MCF 10A (cell line): ENCODE measurements at regions of chr3 and their contacts with region 1.

Region 1: GRCh38 chr3:169041677-169042171 is 621.8 kb downstream of the MECOM start:
- DNase-seq: peak; percentile 46
- H3K4me3 Mint-ChIP-seq: no peak overlapping the region
- H3K27ac Mint-ChIP-seq: peak overlapping the region; percentile 7
- H3K4me1 Mint-ChIP-seq: no peaks in the 10 kb centered on the region
- H3K27me3 Mint-ChIP-seq: no peaks in the 10 kb centered on the region
- CTCF ChIP-seq: peak; percentile 42

Region 2: GRCh38 chr3:168933614-168934013 is 108.1 kb before region 1 on chr3:
- CTCF ChIA-PET with region 1: no interaction called
- POLR2A ChIA-PET with region 1: no interaction called
- intact Hi-C with region 1: no loop called
- DNase-seq: no peak
- H3K4me3 Mint-ChIP-seq: no peak overlapping the region
- H3K27ac Mint-ChIP-seq: no peak overlapping the region
- H3K4me1 Mint-ChIP-seq: no peaks in the 10 kb centered on the region
- H3K27me3 Mint-ChIP-seq: no peaks in the 10 kb centered on the region
- CTCF ChIP-seq: no peak

Region 3: DNA sequence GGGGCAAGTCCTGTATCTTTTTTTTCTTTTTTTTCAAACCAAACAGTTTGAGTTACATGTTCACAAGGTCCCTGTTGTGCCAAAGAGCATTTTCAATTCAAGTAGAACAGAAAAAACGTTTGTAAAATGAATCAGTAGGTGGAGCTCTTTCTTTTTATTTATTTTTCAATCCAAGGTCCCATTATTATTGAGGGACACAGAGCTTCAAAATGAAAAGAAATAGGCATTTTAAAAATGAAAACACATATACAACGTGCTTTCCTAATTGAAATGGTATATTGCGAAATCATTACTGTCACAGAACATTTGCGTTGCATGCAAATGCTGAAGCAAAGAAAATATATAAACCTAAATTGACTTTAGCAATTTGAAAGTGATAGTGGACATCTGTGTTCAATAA is 89.2 kb before region 1 on chr3:
- CTCF ChIA-PET with region 1: interaction called, 13 read pairs
- POLR2A ChIA-PET with region 1: interaction called, 4 read pairs
- intact Hi-C with region 1: loop called (anchors 1 kb)
- DNase-seq: peak; percentile 36
- H3K4me3 Mint-ChIP-seq: no peak overlapping the region
- H3K27ac Mint-ChIP-seq: no peak overlapping the region
- H3K4me1 Mint-ChIP-seq: peaks cover 5% of the 10 kb centered on the region
- H3K27me3 Mint-ChIP-seq: no peaks in the 10 kb centered on the region
- CTCF ChIP-seq: peak; percentile 45

Region 4: GRCh38 chr3:169052465-169053302 is 11.0 kb after region 1 on chr3:
- CTCF ChIA-PET with region 1: interaction called, 22 read pairs
- POLR2A ChIA-PET with region 1: interaction called, 6 read pairs
- intact Hi-C with region 1: no loop called
- DNase-seq: peak; percentile 57
- H3K4me3 Mint-ChIP-seq: no peak overlapping the region
- H3K27ac Mint-ChIP-seq: peak overlapping the region; percentile 81
- H3K4me1 Mint-ChIP-seq: peaks cover 11% of the 10 kb centered on the region
- H3K27me3 Mint-ChIP-seq: no peaks in the 10 kb centered on the region
- CTCF ChIP-seq: no peak

Region 5: DNA sequence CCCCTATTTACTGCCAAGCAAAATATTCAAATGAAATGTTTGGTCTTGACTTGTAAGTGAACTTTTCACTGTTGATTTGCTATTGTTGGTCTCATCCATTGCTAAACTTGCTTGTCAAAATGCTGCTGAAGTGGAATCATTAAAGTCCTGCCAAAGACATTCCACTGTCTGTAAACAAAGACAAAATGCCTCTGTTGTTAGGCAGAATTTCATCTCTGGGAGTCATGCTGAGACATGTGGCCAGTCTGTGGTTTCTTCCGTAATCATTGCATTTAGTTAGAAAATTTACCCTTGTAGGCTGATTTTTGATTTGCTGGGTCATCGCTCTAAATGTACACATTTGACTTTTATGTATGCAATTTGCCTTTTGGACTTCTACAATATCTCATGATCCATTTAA is 44.1 kb after region 1 on chr3:
- CTCF ChIA-PET with region 1: interaction called, 4 read pairs
- POLR2A ChIA-PET with region 1: interaction called, 3 read pairs
- intact Hi-C with region 1: loop called (anchors 5 kb)
- DNase-seq: peak; percentile 87
- H3K4me3 Mint-ChIP-seq: peak overlapping the region; percentile 37
- H3K27ac Mint-ChIP-seq: peak overlapping the region; percentile 96
- H3K4me1 Mint-ChIP-seq: peaks cover 21% of the 10 kb centered on the region
- H3K27me3 Mint-ChIP-seq: no peaks in the 10 kb centered on the region
- CTCF ChIP-seq: no peak

Region 6: DNA sequence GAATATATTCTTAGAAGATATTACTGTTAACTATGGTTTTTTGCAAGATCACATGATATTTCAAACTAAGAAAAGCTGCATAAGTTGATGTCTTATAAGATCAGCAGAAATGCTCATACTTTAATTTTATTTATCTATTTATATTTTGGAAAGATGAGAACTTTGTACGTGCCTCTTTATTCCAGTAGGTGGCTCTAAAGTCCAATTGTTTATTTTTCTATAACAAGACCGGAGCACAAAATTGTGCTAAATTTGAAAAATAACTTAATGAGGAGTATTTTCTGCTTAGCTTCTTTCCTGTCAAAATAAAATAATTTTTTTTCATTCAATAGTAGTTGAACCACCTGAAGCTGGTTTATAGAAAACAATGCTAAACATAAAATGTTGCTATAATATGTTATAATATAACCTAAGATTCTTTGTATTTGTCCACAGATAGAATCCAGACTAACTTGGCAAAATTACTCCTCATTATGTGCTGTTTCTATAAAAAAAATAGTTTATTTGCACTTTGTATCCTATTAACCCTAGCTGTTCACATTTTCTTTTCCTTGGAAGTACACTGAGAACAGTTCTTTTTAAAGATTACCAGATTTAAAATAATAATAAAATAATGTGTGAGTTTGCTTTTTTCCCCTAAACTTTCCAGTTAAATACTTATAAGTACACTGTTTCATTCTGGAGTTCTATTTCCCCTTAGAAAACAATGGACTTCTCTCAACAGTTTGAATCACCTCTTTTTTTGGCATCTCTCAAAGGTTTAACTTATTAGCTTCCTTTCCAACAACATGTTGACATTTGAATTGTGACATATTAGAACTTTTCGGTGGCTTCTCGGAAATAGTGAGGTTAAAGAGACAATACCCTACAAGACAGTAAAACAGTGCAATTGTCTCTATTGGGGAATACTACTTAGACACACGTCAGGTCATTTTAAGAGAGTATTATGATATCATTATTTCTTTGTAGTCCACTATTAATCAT is 91.7 kb after region 1 on chr3:
- CTCF ChIA-PET with region 1: interaction called, 7 read pairs
- POLR2A ChIA-PET with region 1: interaction called, 4 read pairs
- intact Hi-C with region 1: loop called (anchors 5 kb)
- DNase-seq: peak; percentile 33
- H3K4me3 Mint-ChIP-seq: no peak overlapping the region
- H3K27ac Mint-ChIP-seq: peak overlapping the region; percentile 6
- H3K4me1 Mint-ChIP-seq: peaks cover 5% of the 10 kb centered on the region
- H3K27me3 Mint-ChIP-seq: no peaks in the 10 kb centered on the region
- CTCF ChIP-seq: peak; percentile 49